Breast epithelium (tissue), 4 donors: ENCODE measurements at regions of chr12 and their contacts with region 1.

Region 1: GRCh38 chr12:83036847-83037246 is 350.1 kb downstream of the TMTC2 start:
- DNase-seq: no peak
- H3K4me3 ChIP-seq: no peak overlapping the region
- H3K27ac ChIP-seq: no peak overlapping the region
- H3K4me1 ChIP-seq: no peaks in the 10 kb centered on the region
- H3K27me3 ChIP-seq: no peaks in the 10 kb centered on the region
- CTCF ChIP-seq: no peak
- POLR2A ChIP-seq: no peak

Region 2: GRCh38 chr12:82824806-82825205 is 212.0 kb before region 1 on chr12:
- intact Hi-C with region 1: loop called (anchors 5 kb)
- DNase-seq: no peak
- H3K4me3 ChIP-seq: no peak overlapping the region
- H3K27ac ChIP-seq: no peak overlapping the region
- H3K4me1 ChIP-seq: no peaks in the 10 kb centered on the region
- H3K27me3 ChIP-seq: no peaks in the 10 kb centered on the region
- CTCF ChIP-seq: no peak
- POLR2A ChIP-seq: no peak